ENCODE measurements at regions of chr10 and their contacts with region 1.

Region 1: DNA sequence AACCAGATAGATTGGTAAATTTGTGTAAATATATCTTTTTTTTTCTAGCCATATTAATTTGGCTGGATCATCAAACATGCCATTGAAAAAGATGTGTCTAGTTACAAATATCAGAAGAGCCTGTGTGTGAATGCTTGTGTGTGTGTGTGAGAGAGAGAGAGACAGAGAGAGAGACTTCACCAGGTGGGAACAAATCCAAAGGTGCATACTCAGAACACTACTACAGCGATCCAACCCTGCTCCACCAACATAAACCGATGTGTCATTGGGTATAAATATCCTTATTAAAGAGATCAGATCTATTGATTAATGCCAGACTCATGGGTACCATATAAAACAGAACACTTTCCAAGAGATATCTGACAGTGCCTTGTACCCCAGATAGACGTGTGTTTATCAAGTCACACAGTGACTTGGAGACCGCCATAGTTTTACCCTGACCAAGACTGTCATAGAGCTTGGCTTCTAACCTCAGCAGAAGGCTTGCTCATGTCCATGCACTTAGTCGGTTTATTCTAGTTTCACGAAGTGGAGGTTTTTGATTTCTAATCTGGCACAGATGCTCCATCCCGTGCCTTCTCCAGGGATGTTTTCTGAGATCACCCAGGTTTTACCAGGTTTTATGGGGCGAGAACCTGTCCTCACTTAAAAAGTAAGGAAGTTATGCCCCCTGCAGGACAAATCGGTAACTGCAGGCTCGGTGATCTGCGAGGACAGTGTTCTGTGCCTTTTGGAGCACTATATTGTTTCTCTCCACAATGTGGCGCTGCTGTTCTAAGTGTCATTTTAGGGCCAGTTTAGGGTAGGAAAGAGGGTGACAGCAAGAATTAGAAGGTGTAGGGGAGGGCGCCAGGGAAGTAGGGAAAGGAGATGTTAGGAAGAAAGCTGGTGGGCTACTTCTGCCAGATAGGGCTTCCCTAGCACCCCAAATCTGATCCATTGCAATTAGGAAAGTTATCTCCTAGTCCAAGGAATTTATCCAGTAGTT is 29.3 kb upstream of the WNT8B start:
- DNase-seq: peak; percentile 99
- H3K4me3 ChIP-seq: no peak overlapping the region
- H3K27ac ChIP-seq: no peak overlapping the region
- H3K4me1 ChIP-seq: no peaks in the 10 kb centered on the region
- H3K27me3 ChIP-seq: no peaks in the 10 kb centered on the region
- CTCF ChIP-seq: peak; percentile 96

Region 2: DNA sequence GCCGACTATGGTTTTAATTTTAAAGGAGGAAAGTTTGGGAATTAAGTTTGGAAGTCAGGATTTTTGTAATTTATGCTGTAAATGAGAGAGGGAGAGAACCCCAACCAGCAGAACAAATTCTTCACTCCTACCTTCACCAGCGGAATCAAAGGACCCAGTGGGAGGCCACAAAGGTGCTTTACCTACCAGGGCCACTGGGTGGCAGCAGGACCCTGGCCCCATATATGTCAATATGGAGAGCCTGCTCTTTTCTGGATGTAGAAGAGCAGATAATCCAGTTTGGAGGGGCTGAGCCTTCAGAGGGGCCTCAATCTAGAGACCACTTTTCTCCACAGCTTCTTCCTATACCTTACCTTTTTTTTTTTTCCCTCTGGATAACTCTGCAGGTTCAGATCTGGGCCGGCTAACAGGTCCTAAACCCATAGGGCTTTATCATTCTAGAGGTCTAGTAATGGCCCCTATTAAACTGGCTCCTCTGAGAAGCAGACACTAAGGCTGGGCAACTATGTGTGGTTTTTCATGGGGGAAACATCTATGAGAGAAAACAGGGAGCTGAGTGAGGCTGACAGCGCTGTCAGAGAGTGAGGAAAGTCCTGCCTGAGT is 95.0 kb before region 1 on chr10:
- intact Hi-C with region 1: loop called (anchors 2 kb)
- DNase-seq: peak; percentile 82
- H3K4me3 ChIP-seq: no peak overlapping the region
- H3K27ac ChIP-seq: no peak overlapping the region
- H3K4me1 ChIP-seq: no peaks in the 10 kb centered on the region
- H3K27me3 ChIP-seq: no peaks in the 10 kb centered on the region
- CTCF ChIP-seq: peak; percentile 90

Region 3: DNA sequence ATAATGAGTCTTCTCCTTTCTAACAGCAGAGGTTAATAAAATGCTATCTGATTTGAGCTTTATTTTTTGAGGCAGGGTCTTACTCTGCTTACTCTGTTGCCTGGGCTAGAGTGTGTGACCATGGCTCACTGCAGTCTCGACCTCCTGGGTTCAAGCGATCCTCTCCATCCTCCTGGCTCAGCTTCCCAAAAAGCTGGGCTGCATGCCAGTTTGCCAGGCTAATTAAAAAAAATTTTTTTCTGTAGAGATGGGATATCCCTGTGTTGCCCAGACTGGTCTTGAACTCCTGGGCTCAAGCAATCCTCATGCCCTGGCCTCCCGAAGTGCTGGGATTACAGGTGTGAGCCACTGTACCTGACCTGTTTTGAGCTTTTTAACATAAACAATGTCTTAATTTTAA is 29.8 kb before region 1 on chr10:
- intact Hi-C with region 1: no loop called
- DNase-seq: no peak
- H3K4me3 ChIP-seq: no peak overlapping the region
- H3K27ac ChIP-seq: no peak overlapping the region
- H3K4me1 ChIP-seq: no peaks in the 10 kb centered on the region
- H3K27me3 ChIP-seq: no peaks in the 10 kb centered on the region
- CTCF ChIP-seq: no peak

Region 4: DNA sequence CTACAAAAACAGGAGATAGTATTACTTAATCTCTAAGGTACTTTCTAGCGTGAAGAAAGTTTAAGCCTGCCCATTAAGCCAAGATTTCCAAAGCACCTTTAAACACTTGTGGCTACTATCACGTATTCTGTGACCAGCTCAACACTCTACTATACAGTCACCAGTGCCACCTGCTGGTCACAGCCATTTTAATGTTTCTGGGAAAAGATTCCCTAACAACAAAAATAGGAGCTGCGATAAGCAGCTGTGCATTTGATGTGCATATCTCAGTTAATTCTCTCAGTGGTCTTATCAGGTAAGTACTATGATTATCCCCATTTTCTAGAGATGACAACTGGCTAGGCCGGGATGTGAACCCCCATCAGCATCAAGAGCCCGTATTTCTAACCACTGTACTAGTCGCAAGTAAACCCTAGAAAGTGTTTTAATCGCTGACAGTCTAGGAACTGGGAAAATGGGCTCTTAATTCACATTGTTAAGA is 85.3 kb after region 1 on chr10:
- intact Hi-C with region 1: loop called (anchors 5 kb)
- DNase-seq: peak; percentile 80
- H3K4me3 ChIP-seq: peak overlapping the region; percentile 37
- H3K27ac ChIP-seq: no peak overlapping the region
- H3K4me1 ChIP-seq: no peaks in the 10 kb centered on the region
- H3K27me3 ChIP-seq: peaks cover 3% of the 10 kb centered on the region
- CTCF ChIP-seq: peak; percentile 55

Measured in colonic mucosa (tissue), 4 donors.